ENCODE measurements at regions of chr20 and their contacts with region 1.

Region 1: GRCh38 chr20:39081255-39081654 is 119.1 kb downstream of the DHX35 start:
- DNase-seq: peak; percentile 78
- H3K4me3 Mint-ChIP-seq: no peak overlapping the region
- H3K27ac Mint-ChIP-seq: no peak overlapping the region
- H3K4me1 Mint-ChIP-seq: no peaks in the 10 kb centered on the region
- H3K27me3 Mint-ChIP-seq: peaks cover 58% of the 10 kb centered on the region
- CTCF ChIP-seq: peak; percentile 90

Region 2: DNA sequence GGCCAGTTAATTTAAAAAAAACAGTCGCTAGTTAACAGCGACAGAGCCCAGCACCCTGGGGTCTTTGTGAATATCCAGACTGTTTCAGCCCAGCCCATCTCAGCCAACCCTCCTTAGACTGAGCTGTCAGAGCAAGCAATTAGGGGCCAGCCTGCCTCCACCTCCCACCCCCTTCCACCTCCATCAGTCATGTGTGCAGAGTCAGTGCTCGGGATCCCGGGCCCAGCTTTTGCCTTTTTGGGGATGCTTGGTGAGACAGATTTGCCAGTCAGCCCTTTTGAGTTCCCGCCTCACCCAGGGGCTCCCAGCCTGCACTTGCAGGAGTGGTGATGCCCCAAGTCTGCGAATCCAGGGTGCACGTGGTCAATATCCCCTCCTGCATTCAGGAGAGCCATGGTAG is 161.6 kb before region 1 on chr20:
- CTCF ChIA-PET with region 1: interaction called, 12 read pairs
- POLR2A ChIA-PET with region 1: no interaction called
- intact Hi-C with region 1: no loop called
- DNase-seq: no peak
- H3K4me3 Mint-ChIP-seq: no peak overlapping the region
- H3K27ac Mint-ChIP-seq: no peak overlapping the region
- H3K4me1 Mint-ChIP-seq: no peaks in the 10 kb centered on the region
- H3K27me3 Mint-ChIP-seq: peaks cover 37% of the 10 kb centered on the region
- CTCF ChIP-seq: no peak

Region 3: GRCh38 chr20:38990728-38991127 is 90.5 kb before region 1 on chr20:
- CTCF ChIA-PET with region 1: interaction called, 10 read pairs
- POLR2A ChIA-PET with region 1: no interaction called
- intact Hi-C with region 1: no loop called
- DNase-seq: no peak
- H3K4me3 Mint-ChIP-seq: no peak overlapping the region
- H3K27ac Mint-ChIP-seq: no peak overlapping the region
- H3K4me1 Mint-ChIP-seq: peaks cover 13% of the 10 kb centered on the region
- H3K27me3 Mint-ChIP-seq: no peaks in the 10 kb centered on the region
- CTCF ChIP-seq: no peak

Region 4: DNA sequence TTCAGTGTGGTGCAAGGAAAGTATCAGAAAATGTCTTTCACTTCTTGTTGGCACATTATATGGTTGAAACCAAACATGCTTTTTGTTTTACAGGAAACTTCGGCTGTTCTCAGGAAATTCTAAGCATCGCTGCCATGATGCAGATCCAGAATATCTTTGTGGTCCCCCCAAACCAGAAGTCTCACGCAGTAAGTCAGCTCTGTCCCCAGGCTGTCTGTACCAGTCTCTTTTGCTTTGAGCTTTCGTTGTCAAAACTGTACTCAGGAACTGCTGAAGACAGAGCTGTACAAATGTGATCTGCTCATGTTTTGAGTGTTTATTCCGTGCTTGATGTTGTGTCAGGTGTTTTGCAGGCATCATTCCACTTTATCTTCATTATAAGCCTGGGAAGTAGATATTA is 59.5 kb before region 1 on chr20:
- CTCF ChIA-PET with region 1: no interaction called
- POLR2A ChIA-PET with region 1: no interaction called
- intact Hi-C with region 1: no loop called
- DNase-seq: no peak
- H3K4me3 Mint-ChIP-seq: no peak overlapping the region
- H3K27ac Mint-ChIP-seq: no peak overlapping the region
- H3K4me1 Mint-ChIP-seq: no peaks in the 10 kb centered on the region
- H3K27me3 Mint-ChIP-seq: no peaks in the 10 kb centered on the region
- CTCF ChIP-seq: no peak

Region 5: DNA sequence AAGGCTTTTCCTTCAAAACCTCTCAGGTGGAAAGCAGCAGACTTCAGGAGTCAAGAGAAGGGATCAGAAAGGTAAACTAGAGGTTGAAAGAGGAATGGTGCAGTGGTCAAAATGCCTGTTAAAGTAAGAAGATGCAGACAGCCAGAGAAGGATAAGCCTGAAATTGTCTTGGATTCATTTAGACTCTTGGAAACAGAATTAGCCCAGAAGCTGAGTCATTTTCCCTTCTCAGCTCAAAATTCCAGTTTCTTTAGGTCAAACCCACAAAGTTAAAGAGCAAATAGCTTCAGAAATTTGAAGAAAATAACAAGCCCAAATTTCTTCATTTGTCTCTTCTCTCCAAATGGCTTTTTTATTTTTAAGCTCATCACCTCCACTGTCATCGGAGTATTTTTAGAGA is 45.2 kb before region 1 on chr20:
- CTCF ChIA-PET with region 1: interaction called, 14 read pairs
- POLR2A ChIA-PET with region 1: no interaction called
- intact Hi-C with region 1: no loop called
- DNase-seq: no peak
- H3K4me3 Mint-ChIP-seq: no peak overlapping the region
- H3K27ac Mint-ChIP-seq: no peak overlapping the region
- H3K4me1 Mint-ChIP-seq: no peaks in the 10 kb centered on the region
- H3K27me3 Mint-ChIP-seq: no peaks in the 10 kb centered on the region
- CTCF ChIP-seq: no peak

Region 6: DNA sequence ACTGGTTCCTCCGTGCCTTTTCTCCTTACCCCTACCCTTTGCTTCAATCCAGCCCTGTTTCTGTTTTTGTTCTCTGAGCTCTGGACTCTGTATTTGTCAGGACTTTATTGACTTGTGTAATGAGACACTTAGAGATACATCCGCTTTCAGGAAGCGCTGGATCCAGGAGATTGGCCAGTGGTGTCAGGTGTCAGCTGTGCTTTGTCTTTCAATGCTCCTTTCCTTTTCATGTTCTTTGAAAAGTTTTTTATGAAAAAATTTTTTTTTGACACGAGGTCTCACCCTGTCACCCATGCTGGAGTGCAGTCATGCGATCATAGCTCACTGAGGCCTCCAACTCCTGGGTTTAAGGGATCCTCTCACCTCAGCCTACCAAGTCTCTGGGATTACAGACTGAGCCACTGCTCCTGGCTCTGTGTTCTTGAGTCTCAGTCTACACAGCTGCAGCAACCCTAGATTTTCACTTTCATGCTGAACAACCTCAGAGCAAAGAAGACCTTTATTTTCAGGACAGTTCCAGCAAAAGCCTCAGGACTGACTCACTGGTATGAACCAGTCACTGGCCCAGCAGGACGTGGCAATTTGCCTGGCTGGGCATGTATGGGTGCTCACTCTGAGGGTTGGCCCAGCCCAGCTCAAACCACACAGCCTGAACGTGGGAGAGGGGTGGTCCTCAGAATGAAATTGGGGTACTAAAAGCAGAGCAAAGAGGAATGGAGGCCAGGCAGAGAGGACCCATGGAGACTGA is 10.6 kb before region 1 on chr20:
- CTCF ChIA-PET with region 1: interaction called, 157 read pairs
- POLR2A ChIA-PET with region 1: interaction called, 3 read pairs
- intact Hi-C with region 1: no loop called
- DNase-seq: peak; percentile 71
- H3K4me3 Mint-ChIP-seq: no peak overlapping the region
- H3K27ac Mint-ChIP-seq: no peak overlapping the region
- H3K4me1 Mint-ChIP-seq: peaks cover 16% of the 10 kb centered on the region
- H3K27me3 Mint-ChIP-seq: peaks cover 13% of the 10 kb centered on the region
- CTCF ChIP-seq: no peak

Region 7: DNA sequence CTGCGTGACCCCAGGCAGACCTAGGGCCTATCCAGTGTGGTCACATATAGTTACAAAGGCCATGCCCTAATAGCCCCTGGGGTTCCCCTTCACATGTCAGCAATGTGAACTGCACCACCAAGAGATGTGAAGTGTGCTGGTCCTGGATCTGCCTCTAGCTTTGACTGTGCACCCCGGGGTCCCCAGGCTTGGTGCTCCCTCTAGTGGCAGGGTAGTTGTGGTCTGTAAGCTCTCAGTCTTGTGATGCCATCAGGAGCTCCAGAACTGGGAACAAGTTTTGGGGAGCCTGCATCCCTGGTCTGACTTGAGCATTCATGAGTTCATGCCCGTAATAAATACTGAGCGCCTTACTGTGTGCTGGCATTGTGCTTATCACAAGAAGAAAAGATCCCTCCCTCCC is 24.3 kb after region 1 on chr20:
- CTCF ChIA-PET with region 1: interaction called, 12 read pairs
- POLR2A ChIA-PET with region 1: no interaction called
- intact Hi-C with region 1: no loop called
- DNase-seq: no peak
- H3K4me3 Mint-ChIP-seq: no peak overlapping the region
- H3K27ac Mint-ChIP-seq: no peak overlapping the region
- H3K4me1 Mint-ChIP-seq: no peaks in the 10 kb centered on the region
- H3K27me3 Mint-ChIP-seq: peaks cover 39% of the 10 kb centered on the region
- CTCF ChIP-seq: peak; percentile 12

Region 8: DNA sequence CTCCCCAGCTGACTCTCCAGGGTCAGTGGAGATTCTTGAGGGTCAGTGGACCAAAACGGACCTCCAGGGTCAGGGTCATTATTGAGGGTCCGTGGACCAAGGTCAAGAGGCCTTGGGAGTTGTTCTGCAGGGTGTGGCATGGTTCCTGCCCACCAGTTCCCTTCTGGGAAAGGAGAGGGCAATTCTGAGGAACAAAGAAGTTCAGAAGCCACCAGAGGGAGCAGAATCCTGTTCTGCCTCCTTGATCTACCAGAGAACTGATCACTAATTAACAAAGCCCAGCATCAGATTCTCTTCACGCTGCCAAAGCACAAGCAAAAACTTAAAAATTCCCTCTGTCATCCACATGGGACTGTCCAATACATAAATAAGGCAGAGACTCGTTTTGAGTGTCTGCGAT is 144.3 kb after region 1 on chr20:
- CTCF ChIA-PET with region 1: no interaction called
- POLR2A ChIA-PET with region 1: no interaction called
- intact Hi-C with region 1: no loop called
- DNase-seq: no peak
- H3K4me3 Mint-ChIP-seq: no peak overlapping the region
- H3K27ac Mint-ChIP-seq: no peak overlapping the region
- H3K4me1 Mint-ChIP-seq: no peaks in the 10 kb centered on the region
- H3K27me3 Mint-ChIP-seq: peaks cover 68% of the 10 kb centered on the region
- CTCF ChIP-seq: no peak

Region 9: GRCh38 chr20:39326050-39326449 is 244.8 kb after region 1 on chr20:
- CTCF ChIA-PET with region 1: no interaction called
- POLR2A ChIA-PET with region 1: no interaction called
- intact Hi-C with region 1: no loop called
- DNase-seq: no peak
- H3K4me3 Mint-ChIP-seq: no peak overlapping the region
- H3K27ac Mint-ChIP-seq: no peak overlapping the region
- H3K4me1 Mint-ChIP-seq: no peaks in the 10 kb centered on the region
- H3K27me3 Mint-ChIP-seq: no peaks in the 10 kb centered on the region
- CTCF ChIP-seq: no peak

Region 10: GRCh38 chr20:39503902-39504709 is 422.9 kb after region 1 on chr20:
- CTCF ChIA-PET with region 1: no interaction called
- POLR2A ChIA-PET with region 1: no interaction called
- intact Hi-C with region 1: no loop called
- DNase-seq: no peak
- H3K4me3 Mint-ChIP-seq: no peak overlapping the region
- H3K27ac Mint-ChIP-seq: no peak overlapping the region
- H3K4me1 Mint-ChIP-seq: no peaks in the 10 kb centered on the region
- H3K27me3 Mint-ChIP-seq: no peaks in the 10 kb centered on the region
- CTCF ChIP-seq: no peak